Spleen (tissue), 13 donors: ENCODE measurements at regions of chr14 and their contacts with region 1.

Region 1: GRCh38 chr14:55158412-55158811 is 29.4 kb downstream of the LGALS3 start:
- DNase-seq: no peak
- H3K4me3 ChIP-seq: no peak overlapping the region
- H3K27ac ChIP-seq: no peak overlapping the region
- H3K4me1 ChIP-seq: peaks cover 0 to 9% (median 0%) of the 10 kb centered on the region in 6 donors
- H3K27me3 ChIP-seq: no peaks in the 10 kb centered on the region
- CTCF ChIP-seq: no peak
- POLR2A ChIP-seq: no peak

Region 2: GRCh38 chr14:55088356-55088755 is 70.1 kb before region 1 on chr14:
- intact Hi-C with region 1: loop called (anchors 2 kb)
- DNase-seq: no peak
- H3K4me3 ChIP-seq: no peak overlapping the region
- H3K27ac ChIP-seq: no peak overlapping the region
- H3K4me1 ChIP-seq: peaks cover 0 to 8% (median 6%) of the 10 kb centered on the region in 6 donors
- H3K27me3 ChIP-seq: no peaks in the 10 kb centered on the region
- CTCF ChIP-seq: no peak
- POLR2A ChIP-seq: no peak